Endothelial cell of umbilical vein (primary cell): ENCODE measurements at regions of chr9 and their contacts with region 1.

Region 1: GRCh38 chr9:15249042-15249818 is 57.8 kb downstream of the TTC39B start:
- DNase-seq: peak; percentile 69
- H3K4me3 ChIP-seq: no peak overlapping the region
- H3K27ac ChIP-seq: peak overlapping the region; percentile 68
- H3K4me1 ChIP-seq: peaks cover 42% of the 10 kb centered on the region
- H3K27me3 ChIP-seq: no peaks in the 10 kb centered on the region
- CTCF ChIP-seq: no peak
- POLR2A ChIP-seq: no peak

Region 2: DNA sequence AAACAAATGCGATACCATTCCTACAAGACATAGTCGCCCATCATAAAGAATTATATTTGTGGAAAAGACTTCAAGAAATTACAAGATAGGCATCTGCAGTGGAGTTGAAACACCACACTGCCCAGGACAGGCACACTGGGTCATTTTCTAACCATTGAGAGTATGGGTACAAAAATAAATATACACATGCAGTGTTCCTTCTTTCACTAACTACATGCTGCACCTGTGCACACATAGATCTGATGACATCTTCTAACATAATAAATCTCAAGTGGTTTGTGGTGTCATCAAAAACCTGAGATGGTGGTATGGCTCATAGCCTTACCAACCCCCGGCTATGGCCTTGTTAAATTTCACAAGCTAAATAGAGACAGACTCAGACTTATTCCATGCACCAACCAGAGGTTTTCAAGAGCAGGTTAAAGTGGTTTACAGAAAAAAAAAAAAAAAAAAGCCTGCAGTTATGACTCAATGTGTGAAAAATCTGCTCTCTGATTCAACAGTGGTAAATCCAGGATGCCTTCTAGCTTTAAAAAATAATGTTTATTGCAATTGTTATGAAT is 922.9 kb before region 1 on chr9:
- CTCF ChIA-PET with region 1: no interaction called
- POLR2A ChIA-PET with region 1: no interaction called
- dilution Hi-C with region 1: no loop called
- intact Hi-C with region 1: no loop called
- DNase-seq: peak; percentile 52
- H3K4me3 ChIP-seq: no peak overlapping the region
- H3K27ac ChIP-seq: no peak overlapping the region
- H3K4me1 ChIP-seq: peaks cover 23% of the 10 kb centered on the region
- H3K27me3 ChIP-seq: no peaks in the 10 kb centered on the region
- CTCF ChIP-seq: no peak
- POLR2A ChIP-seq: no peak

Region 3: GRCh38 chr9:14554886-14555285 is 694.3 kb before region 1 on chr9:
- CTCF ChIA-PET with region 1: no interaction called
- POLR2A ChIA-PET with region 1: no interaction called
- dilution Hi-C with region 1: no loop called
- intact Hi-C with region 1: no loop called
- DNase-seq: peak; percentile 78
- H3K4me3 ChIP-seq: no peak overlapping the region
- H3K27ac ChIP-seq: peak overlapping the region; percentile 9
- H3K4me1 ChIP-seq: peaks cover 16% of the 10 kb centered on the region
- H3K27me3 ChIP-seq: no peaks in the 10 kb centered on the region
- CTCF ChIP-seq: no peak
- POLR2A ChIP-seq: no peak

Region 4: DNA sequence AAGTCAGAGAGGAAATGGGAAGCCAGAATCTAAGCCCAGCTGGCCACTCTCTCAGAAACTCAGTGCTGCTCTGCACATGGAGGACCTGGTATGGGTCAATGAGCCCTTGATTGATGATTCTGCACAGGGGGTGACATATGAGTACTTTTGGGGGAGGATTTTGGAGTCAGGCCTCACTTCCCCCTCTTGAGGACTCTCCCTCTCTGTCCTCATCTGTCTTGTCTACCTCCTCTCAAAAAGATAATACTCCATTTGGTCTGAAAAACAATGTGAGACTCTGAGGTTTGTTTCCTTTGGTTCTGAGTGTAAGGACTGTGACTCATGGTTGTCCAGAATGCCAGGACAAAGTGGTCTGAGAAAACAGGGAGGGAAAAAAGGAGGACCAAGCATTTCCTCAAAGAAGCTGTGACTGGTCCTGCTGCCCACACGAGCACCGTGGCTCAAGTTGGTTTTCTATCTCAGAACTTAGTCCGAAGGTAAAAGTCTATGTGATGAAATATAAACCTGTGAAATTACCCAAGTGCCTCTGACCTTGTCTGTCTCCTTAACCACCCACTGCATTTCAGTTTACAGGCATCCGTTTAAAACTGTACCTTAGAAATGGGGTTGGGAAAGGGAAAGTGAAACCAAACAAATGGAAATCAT is 46.7 kb after region 1 on chr9:
- CTCF ChIA-PET with region 1: interaction called, 3 read pairs
- POLR2A ChIA-PET with region 1: no interaction called
- dilution Hi-C with region 1: no loop called
- intact Hi-C with region 1: loop called (anchors 1 kb)
- DNase-seq: peak; percentile 87
- H3K4me3 ChIP-seq: peak overlapping the region; percentile 29 to 85 (median 55)
- H3K27ac ChIP-seq: peak overlapping the region; percentile 90
- H3K4me1 ChIP-seq: peaks cover 9% of the 10 kb centered on the region
- H3K27me3 ChIP-seq: no peaks in the 10 kb centered on the region
- CTCF ChIP-seq: no peak
- POLR2A ChIP-seq: no peak